ENCODE measurements at regions of chr12 and their contacts with region 1.

Region 1: GRCh38 chr12:27523642-27524493 is at the start of gene PPFIBP1:
- DNase-seq: peak; percentile 97 to 98
- ATAC-seq: peak; percentile 96 to 97
- H3K4me3 ChIP-seq: peak within 1 kb of the TSS; percentile 63
- H3K27ac ChIP-seq: peak within 1 kb of the TSS; percentile 86 to 94
- H3K4me1 ChIP-seq: peaks cover 21% of the 10 kb centered on the region
- CTCF ChIP-seq: peak; percentile 8; the same call in 1 of the 3 replicates
- EP300 ChIP-seq: no peak
- POLR2A ChIP-seq: peak; percentile 83
- RAD21 ChIP-seq: peak; percentile 3 to 49; a peak in 4 of 5 replicates
- polyA plus RNA-seq, gene PPFIBP1: 85.3 and 89.0 TPM in 2 replicates

Region 2: DNA sequence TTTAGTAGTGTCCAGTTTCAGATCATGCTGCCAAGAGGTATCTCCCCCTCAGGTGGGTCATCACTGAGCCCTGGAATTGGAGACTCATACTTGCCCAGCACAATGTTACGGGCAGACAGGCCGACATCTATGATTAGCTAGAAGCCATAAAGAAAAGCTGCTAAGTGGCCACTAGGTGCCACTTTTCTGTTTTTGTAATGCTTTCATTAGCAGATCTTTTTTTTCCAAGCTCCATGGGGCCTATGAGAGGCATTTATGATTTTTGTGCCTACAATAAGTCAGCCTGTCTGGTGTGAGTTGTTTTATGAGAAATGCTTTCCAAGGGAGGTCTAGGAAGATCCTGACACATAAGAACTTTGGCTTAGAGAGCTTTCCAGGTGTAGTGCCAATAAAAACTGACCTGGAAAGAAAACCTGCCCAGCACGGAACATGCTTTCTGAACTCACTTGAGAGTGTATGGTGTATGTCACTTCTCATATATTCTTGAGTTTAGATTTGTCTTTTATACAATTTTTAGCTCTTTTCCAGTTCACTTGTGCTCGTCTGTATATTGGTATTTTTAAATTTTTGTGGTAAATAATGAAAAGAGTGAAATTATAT is 99.1 kb before region 1 on chr12:
- CTCF ChIA-PET with region 1: interaction called, 5 read pairs
- POLR2A ChIA-PET with region 1: interaction called, 10 read pairs
- DNase-seq: peak; percentile 37 to 62
- ATAC-seq: peak; percentile 85 to 90
- H3K4me3 ChIP-seq: no peak overlapping the region
- H3K27ac ChIP-seq: no peak overlapping the region
- H3K4me1 ChIP-seq: no peaks in the 10 kb centered on the region
- CTCF ChIP-seq: peak; percentile 58
- EP300 ChIP-seq: no peak
- POLR2A ChIP-seq: no peak
- RAD21 ChIP-seq: peak; percentile 60 to 61

Region 3: GRCh38 chr12:27434673-27435565 is 88.9 kb before region 1 on chr12:
- CTCF ChIA-PET with region 1: interaction called, 8 read pairs
- POLR2A ChIA-PET with region 1: interaction called, 13 read pairs
- DNase-seq: peak in 1 of 2 experiments; percentile 26
- ATAC-seq: peak; percentile 79 to 87
- H3K4me3 ChIP-seq: no peak overlapping the region
- H3K27ac ChIP-seq: peak overlapping the region in 1 of 2 experiments; percentile 34; a peak in 2 of 6 replicates
- H3K4me1 ChIP-seq: no peaks in the 10 kb centered on the region
- CTCF ChIP-seq: peak; percentile 47
- EP300 ChIP-seq: no peak
- POLR2A ChIP-seq: no peak
- RAD21 ChIP-seq: peak; percentile 44 to 72

Region 4: DNA sequence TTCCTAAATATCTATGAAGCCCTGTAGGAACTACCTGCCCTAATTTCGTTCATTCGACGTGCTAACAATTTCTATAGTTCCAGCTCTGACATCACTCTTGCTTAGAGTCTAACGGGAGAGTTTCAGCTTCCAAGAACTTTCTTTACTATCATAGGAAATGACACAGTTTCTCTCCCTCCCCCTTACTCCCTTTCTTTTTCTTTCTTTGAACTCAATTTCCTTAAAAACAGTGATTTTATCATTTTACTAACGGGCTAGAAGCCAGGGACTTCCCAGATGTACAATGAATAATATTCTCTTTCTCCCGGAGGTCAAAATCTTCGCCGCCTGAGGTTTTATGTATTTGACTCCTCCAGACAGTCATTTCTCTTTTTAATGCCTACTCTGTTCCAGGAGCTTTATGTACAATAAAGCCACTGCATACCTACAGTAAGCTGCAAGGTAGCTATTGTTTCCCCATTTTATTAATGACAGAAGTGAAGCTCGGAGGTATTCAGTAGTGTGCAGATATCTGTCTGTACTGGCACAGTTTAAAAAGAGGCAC is 61.6 kb before region 1 on chr12:
- CTCF ChIA-PET with region 1: interaction called, 3 read pairs
- POLR2A ChIA-PET with region 1: interaction called, 10 read pairs
- DNase-seq: peak in 1 of 2 experiments; percentile 16
- ATAC-seq: peak; percentile 57 to 58; a peak in 4 of 6 replicates
- H3K4me3 ChIP-seq: no peak overlapping the region
- H3K27ac ChIP-seq: peak overlapping the region; percentile 31 to 66; a peak in 4 of 6 replicates
- H3K4me1 ChIP-seq: peaks cover 35% of the 10 kb centered on the region
- CTCF ChIP-seq: no peak
- EP300 ChIP-seq: no peak
- POLR2A ChIP-seq: no peak
- RAD21 ChIP-seq: no peak

Region 5: GRCh38 chr12:27549801-27550652 is 26.2 kb after region 1 on chr12:
- CTCF ChIA-PET with region 1: interaction called, 9 read pairs
- POLR2A ChIA-PET with region 1: interaction called, 43 read pairs
- DNase-seq: peak; percentile 71 to 95
- ATAC-seq: peak; percentile 89 to 92
- H3K4me3 ChIP-seq: peak overlapping the region; percentile 30
- H3K27ac ChIP-seq: peak overlapping the region; percentile 90 to 96
- H3K4me1 ChIP-seq: peaks cover 50% of the 10 kb centered on the region
- CTCF ChIP-seq: no peak
- EP300 ChIP-seq: peak in 1 of 2 experiments; percentile 75; a peak in 3 of 5 replicates
- POLR2A ChIP-seq: no peak
- RAD21 ChIP-seq: peak in 1 of 2 experiments; percentile 12; a peak in 1 of 5 replicates

Region 6: DNA sequence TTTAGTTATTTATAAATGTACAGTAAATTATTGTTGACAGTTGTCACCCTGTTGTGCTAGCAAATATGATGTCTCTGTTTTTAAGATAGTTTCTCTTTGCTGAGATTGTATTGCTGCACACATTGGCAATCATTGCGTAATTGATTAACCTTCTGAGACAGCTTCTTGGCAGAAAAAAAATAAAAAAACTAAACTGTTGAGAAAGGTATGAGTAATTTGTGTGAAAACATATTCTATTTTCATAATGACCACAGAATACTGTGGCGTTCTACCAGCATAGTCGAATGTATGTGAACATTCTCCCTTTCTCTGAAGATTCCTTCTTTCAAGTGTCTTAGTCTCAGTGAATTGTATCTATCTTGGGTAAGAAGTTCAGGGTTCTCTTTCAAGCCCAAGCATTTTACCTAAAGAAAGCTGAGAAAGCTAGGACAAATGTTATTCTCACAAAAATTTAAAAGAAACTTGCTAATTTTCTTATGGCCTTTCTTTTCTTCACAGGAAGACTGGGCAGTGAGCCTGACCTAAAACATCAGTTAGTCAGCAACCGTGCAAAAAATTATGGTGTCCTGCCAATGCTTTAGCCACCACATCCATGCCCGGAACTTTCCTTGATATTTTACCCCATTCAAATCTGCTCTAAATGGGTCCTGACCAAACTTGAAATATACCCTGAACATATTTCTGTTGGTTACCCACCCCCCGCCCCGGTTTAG is 103.4 kb after region 1 on chr12:
- CTCF ChIA-PET with region 1: no interaction called
- POLR2A ChIA-PET with region 1: interaction called, 13 read pairs
- DNase-seq: no peak
- ATAC-seq: peak in 1 of 2 experiments; percentile 39; a peak in 1 of 6 replicates
- H3K4me3 ChIP-seq: no peak overlapping the region
- H3K27ac ChIP-seq: peak overlapping the region in 1 of 2 experiments; percentile 55; a peak in 3 of 6 replicates
- H3K4me1 ChIP-seq: peaks cover 48% of the 10 kb centered on the region
- CTCF ChIP-seq: no peak
- EP300 ChIP-seq: no peak
- POLR2A ChIP-seq: no peak
- RAD21 ChIP-seq: no peak

Region 7: GRCh38 chr12:27635349-27635972 is 111.6 kb after region 1 on chr12:
- CTCF ChIA-PET with region 1: interaction called, 27 read pairs
- POLR2A ChIA-PET with region 1: interaction called, 4 read pairs
- DNase-seq: peak; percentile 41 to 67
- ATAC-seq: peak in 1 of 2 experiments; percentile 68; a peak in 3 of 6 replicates
- H3K4me3 ChIP-seq: no peak overlapping the region
- H3K27ac ChIP-seq: peak overlapping the region in 1 of 2 experiments; percentile 70; a peak in 3 of 6 replicates
- H3K4me1 ChIP-seq: peaks cover 10% of the 10 kb centered on the region; the same call in 2 of the 3 replicates
- CTCF ChIP-seq: peak; percentile 81
- EP300 ChIP-seq: no peak
- POLR2A ChIP-seq: no peak
- RAD21 ChIP-seq: peak; percentile 90 to 93

Measured in A549 (cell line).